Posterior vena cava (tissue), 2 donors: ENCODE measurements at regions of chr18 and their contacts with region 1.

Region 1: DNA sequence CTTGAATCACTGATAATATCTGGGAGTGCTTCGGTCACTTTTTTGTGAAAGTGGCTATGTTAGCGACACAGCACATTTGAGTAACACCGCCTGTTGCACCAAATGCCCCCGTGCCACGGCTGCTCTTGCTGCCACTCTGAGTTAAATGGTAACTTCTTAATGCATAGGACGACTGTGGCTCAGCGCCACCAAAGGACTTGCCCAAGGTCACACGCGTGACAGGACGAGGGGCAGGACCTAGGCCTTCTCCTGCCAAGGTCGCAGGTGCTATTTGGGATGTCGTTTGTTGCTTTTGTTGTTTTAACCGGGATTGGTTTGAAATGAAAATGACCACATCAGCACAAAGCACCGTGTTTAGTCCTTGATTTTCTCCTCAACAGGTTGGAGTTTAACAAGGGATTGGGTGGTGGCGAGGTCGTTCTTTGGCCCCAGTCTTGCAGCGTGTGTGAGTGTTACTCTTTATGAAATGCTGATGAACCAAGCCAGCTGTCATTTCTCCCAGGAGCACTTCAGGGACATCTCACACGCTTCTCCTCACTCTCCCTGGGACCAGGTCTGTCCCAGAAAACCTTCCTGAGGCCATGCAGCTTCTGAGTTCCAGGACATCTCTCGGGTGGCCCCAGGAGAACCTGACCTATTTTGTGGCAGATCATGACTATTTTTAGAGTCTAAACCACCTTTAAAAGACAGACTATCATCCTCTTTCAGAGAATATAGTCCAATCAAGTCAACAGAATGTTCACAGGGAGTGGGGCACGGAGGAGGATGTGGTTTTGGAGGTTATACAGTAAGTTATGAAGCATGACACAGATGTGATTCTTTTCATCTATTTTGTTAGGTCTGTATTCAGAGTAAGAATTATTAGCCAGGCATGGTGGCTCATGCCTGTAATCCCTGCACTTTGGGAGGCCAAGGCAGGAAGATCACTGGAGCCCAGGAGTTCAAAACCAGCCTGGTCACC is 49.9 kb downstream of the MTCL1 start:
- DNase-seq: no peak

Region 2: GRCh38 chr18:8735274-8735673 is 20.0 kb before region 1 on chr18:
- intact Hi-C with region 1: loop called in 1 of 2 experiments (anchors 1 kb)
- DNase-seq: no peak